Mammary epithelial cell (primary cell): ENCODE measurements at regions of chr13 and their contacts with region 1.

Region 1: GRCh38 chr13:99264051-99264450 is 5.9 kb upstream of the GPR18 start:
- DNase-seq: no peak
- H3K4me3 ChIP-seq: no peak overlapping the region
- H3K27ac ChIP-seq: no peak overlapping the region
- H3K4me1 ChIP-seq: no peaks in the 10 kb centered on the region
- H3K27me3 ChIP-seq: no peaks in the 10 kb centered on the region
- CTCF ChIP-seq: no peak

Region 2: GRCh38 chr13:99312493-99312883 is 48.4 kb after region 1 on chr13:
- CTCF ChIA-PET with region 1: no interaction called
- dilution Hi-C with region 1: loop called (anchors 5 kb)
- in situ Hi-C with region 1: no loop called
- intact Hi-C with region 1: no loop called
- DNase-seq: no peak
- H3K4me3 ChIP-seq: no peak overlapping the region
- H3K27ac ChIP-seq: no peak overlapping the region
- H3K4me1 ChIP-seq: peaks cover 4% of the 10 kb centered on the region
- H3K27me3 ChIP-seq: no peaks in the 10 kb centered on the region
- CTCF ChIP-seq: no peak